SK-N-SH (cell line): ENCODE measurements at regions of chr14 and their contacts with region 1.

Region 1: GRCh38 chr14:69818757-69819191 is 21.7 kb upstream of the SLC10A1 start:
- DNase-seq: peak; percentile 76
- H3K4me3 ChIP-seq: peak overlapping the region in 1 of 2 experiments; percentile 16; a peak in 1 of 4 replicates
- H3K27ac ChIP-seq: no peak overlapping the region
- H3K4me1 ChIP-seq: no peaks in the 10 kb centered on the region
- H3K27me3 ChIP-seq: peaks cover 9% of the 10 kb centered on the region; the same call in 1 of the 2 replicates
- CTCF ChIP-seq: peak; percentile 93
- EP300 ChIP-seq: no peak
- RAD21 ChIP-seq: peak; percentile 97

Region 2: DNA sequence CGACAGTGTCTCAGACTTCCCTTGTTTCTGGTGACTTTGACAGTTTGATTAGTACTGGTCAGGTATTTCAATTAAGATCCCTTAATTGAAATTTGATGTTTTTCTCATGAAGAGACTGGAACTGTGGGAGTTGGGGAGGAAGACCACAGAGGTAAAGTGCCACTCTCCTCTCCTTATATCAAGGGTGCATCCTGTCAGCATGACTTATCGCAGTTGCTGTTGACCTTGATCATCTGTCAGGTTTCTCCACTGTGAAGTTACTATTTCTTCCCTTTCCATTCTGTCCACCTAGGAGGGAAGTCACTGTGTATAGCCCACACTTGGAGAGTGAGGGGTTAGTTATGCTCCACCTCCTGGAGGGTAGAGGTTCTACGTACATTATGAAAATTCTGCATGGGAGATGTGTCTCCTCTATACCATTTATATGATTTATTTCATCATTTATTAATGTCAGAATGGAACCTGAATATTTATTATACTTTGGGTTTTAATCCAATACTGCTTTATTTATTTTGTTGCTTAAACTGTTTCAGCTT is 20.2 kb after region 1 on chr14:
- CTCF ChIA-PET with region 1: interaction called, 10 read pairs
- POLR2A ChIA-PET with region 1: no interaction called
- DNase-seq: no peak
- H3K4me3 ChIP-seq: no peak overlapping the region
- H3K27ac ChIP-seq: no peak overlapping the region
- H3K4me1 ChIP-seq: peaks cover 0 to 11% of the 10 kb centered on the region in 2 experiments; a peak in 1 of 4 replicates
- H3K27me3 ChIP-seq: no peaks in the 10 kb centered on the region
- CTCF ChIP-seq: no peak
- EP300 ChIP-seq: no peak
- RAD21 ChIP-seq: no peak

Region 3: GRCh38 chr14:70013269-70013873 is 194.6 kb after region 1 on chr14:
- CTCF ChIA-PET with region 1: interaction called, 38 read pairs
- POLR2A ChIA-PET with region 1: no interaction called
- DNase-seq: peak; percentile 52
- H3K4me3 ChIP-seq: no peak overlapping the region; a peak in 1 of 4 replicates
- H3K27ac ChIP-seq: no peak overlapping the region
- H3K4me1 ChIP-seq: peaks cover 0 to 14% of the 10 kb centered on the region in 2 experiments; a peak in 1 of 4 replicates
- H3K27me3 ChIP-seq: no peaks in the 10 kb centered on the region; the same call in 1 of the 2 replicates
- CTCF ChIP-seq: peak; percentile 53
- EP300 ChIP-seq: no peak
- RAD21 ChIP-seq: peak; percentile 50

Region 4: DNA sequence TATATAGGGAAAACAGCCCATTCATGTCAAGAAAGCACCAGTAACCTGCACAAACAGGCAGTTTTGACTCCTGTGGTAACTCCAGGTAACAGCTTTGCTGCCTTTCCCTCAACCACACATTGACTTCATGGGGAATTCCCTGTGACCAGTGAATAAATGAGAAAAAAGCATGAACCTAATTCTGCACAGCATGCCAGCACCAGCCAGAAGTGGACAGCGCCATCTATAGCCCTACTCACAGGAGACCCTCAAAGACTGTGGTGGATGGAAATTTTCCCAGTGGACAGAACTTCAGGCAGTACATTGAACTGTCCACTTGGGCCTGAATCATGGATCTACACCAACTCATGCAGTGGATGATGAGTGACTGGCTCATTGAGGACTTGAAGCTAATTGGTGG is 217.9 kb after region 1 on chr14:
- CTCF ChIA-PET with region 1: interaction called, 51 read pairs
- POLR2A ChIA-PET with region 1: no interaction called
- DNase-seq: no peak
- H3K4me3 ChIP-seq: no peak overlapping the region
- H3K27ac ChIP-seq: no peak overlapping the region
- H3K4me1 ChIP-seq: peaks cover 0 to 3% of the 10 kb centered on the region in 2 experiments; a peak in 1 of 4 replicates
- H3K27me3 ChIP-seq: no peaks in the 10 kb centered on the region
- CTCF ChIP-seq: no peak
- EP300 ChIP-seq: no peak
- RAD21 ChIP-seq: no peak

Region 5: GRCh38 chr14:70317969-70318634 is 499.3 kb after region 1 on chr14:
- CTCF ChIA-PET with region 1: interaction called, 18 read pairs
- POLR2A ChIA-PET with region 1: no interaction called
- DNase-seq: peak; percentile 63
- H3K4me3 ChIP-seq: no peak overlapping the region; a peak in 1 of 4 replicates
- H3K27ac ChIP-seq: no peak overlapping the region
- H3K4me1 ChIP-seq: no peaks in the 10 kb centered on the region; a peak in 1 of 4 replicates
- H3K27me3 ChIP-seq: no peaks in the 10 kb centered on the region
- CTCF ChIP-seq: peak; percentile 58
- EP300 ChIP-seq: no peak
- RAD21 ChIP-seq: peak; percentile 95